Prostate gland (tissue), 2 donors: ENCODE measurements at regions of chr1 and their contacts with region 1.

Region 1: DNA sequence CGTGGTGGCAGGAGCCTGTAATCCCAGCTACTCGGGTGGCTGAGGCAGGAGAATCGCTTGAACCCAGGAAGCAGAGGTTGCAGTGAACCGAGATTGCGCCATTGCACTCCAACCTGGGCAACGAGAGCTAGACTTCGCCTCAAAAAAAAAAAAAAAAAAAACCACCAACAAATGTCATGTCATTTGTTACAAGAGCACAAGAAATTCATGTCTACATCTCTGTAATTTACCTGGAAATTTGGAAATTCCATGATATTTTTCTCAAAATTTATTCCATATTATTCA is 16.5 kb upstream of the VPS45 start:
- DNase-seq: no peak
- H3K4me3 ChIP-seq: no peak overlapping the region
- H3K27ac ChIP-seq: no peak overlapping the region
- H3K4me1 ChIP-seq: no peaks in the 10 kb centered on the region
- H3K27me3 ChIP-seq: no peaks in the 10 kb centered on the region
- CTCF ChIP-seq: no peak
- POLR2A ChIP-seq: no peak

Region 2: DNA sequence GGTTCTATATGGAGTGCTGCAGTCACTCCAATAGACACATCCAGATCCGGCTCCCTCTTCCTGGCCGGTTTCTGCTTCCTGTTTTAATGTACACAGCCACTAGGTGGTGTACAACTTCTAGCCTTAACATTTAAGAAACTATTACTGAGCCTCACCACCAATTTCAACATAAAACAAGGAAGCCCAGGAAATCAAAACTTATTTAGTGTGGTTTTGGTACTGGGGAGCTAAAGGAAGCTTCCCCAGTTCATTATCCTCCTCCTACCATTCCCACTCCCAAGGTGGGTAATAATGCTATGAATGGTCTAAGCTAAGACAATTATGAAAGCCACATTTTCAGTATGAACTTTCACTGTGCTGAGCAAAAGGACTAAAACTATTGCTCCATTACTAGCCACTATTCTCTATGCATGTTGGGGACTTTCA is 88.9 kb before region 1 on chr1:
- intact Hi-C with region 1: loop called (anchors 2 kb)
- DNase-seq: peak; percentile 68
- H3K4me3 ChIP-seq: no peak overlapping the region
- H3K27ac ChIP-seq: peak overlapping the region; percentile 10 to 53
- H3K4me1 ChIP-seq: no peaks in the 10 kb centered on the region
- H3K27me3 ChIP-seq: no peaks in the 10 kb centered on the region
- CTCF ChIP-seq: peak; percentile 70 to 89 (median 84)
- POLR2A ChIP-seq: no peak

Region 3: DNA sequence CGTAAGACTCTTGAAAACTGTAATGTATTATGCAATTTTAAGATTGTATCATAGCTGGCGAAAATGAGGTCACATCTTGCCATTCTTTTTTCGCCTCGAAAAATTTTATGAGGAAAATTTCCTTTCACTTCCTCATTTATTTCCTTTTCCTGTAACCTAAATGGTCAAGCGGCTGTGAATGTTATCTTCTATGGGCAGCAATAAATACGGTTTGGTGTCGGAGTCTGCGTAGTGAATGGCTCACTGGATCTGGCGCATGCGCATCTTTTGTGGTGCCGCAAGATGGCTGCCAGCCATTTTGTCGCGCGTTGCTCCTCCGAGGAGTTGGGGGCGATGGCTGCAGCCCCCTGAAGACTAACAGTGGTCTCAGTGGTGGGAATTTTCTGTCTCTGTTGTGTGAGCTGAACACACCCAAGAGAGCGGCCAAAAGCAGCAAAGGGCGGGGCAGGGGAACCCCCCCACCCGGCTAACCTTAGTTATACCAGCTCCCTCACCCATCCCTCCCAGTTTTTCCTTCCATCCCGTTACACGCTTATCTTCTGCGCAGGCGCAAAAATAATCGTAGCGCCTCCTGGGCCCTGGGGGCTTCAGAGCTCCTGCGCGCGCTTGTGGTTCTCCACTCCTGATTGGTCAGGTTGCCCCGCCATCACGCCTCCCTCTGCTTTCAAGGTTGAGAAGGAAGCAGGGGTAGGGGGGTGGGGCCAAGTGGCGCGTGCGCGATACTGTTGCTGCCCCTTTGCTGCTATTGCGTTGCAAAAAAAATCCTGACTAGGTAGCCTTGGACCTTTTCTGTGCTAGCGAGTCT is 312.6 kb after region 1 on chr1 and contains the start of gene RPRD2:
- intact Hi-C with region 1: no loop called
- DNase-seq: peak; percentile 99
- H3K4me3 ChIP-seq: peak within 1 kb of the TSS; percentile 70 to 75
- H3K27ac ChIP-seq: peak within 1 kb of the TSS; percentile 87 to 98
- H3K4me1 ChIP-seq: no peaks in the 10 kb centered on the region
- H3K27me3 ChIP-seq: no peaks in the 10 kb centered on the region
- CTCF ChIP-seq: no peak
- POLR2A ChIP-seq: peak; percentile 37
- total RNA-seq, gene RPRD2: 20.6 to 31.4 TPM